MCF 10A (cell line): ENCODE measurements at regions of chr1 and their contacts with region 1.

Region 1: DNA sequence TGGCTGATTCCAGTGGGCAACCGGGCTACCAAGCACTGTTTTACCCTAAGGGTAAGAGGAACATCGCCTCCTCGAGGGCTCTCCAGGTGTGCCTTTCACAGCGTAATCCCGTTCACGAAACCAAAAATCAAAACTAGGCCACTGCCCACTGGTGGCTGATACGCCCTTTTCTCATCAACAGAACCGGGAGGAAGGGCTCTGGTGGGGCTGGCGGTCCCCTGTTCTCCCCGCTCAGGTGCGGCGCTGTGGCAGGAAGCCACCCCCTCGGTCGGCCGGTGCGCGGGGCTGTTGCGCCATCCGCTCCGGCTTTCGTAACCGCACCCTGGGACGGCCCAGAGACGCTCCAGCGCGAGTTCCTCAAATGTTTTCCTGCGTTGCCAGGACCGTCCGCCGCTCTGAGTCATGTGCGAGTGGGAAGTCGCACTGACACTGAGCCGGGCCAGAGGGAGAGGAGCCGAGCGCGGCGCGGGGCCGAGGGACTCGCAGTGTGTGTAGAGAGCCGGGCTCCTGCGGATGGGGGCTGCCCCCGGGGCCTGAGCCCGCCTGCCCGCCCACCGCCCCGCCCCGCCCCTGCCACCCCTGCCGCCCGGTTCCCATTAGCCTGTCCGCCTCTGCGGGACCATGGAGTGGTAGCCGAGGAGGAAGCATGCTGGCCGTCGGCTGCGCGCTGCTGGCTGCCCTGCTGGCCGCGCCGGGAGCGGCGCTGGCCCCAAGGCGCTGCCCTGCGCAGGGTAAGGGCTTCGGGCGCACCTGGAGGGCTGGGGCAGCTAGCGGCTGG is at the start of gene IL6R:
- DNase-seq: peak; percentile 99
- H3K4me3 Mint-ChIP-seq: peak within 1 kb of the TSS; percentile 99
- H3K27ac Mint-ChIP-seq: peak within 1 kb of the TSS; percentile 96
- H3K4me1 Mint-ChIP-seq: peaks cover 37% of the 10 kb centered on the region
- H3K27me3 Mint-ChIP-seq: no peaks in the 10 kb centered on the region
- CTCF ChIP-seq: peak; percentile 38
- total RNA-seq, gene IL6R: 22.8 and 41.0 TPM in 2 replicates

Region 2: DNA sequence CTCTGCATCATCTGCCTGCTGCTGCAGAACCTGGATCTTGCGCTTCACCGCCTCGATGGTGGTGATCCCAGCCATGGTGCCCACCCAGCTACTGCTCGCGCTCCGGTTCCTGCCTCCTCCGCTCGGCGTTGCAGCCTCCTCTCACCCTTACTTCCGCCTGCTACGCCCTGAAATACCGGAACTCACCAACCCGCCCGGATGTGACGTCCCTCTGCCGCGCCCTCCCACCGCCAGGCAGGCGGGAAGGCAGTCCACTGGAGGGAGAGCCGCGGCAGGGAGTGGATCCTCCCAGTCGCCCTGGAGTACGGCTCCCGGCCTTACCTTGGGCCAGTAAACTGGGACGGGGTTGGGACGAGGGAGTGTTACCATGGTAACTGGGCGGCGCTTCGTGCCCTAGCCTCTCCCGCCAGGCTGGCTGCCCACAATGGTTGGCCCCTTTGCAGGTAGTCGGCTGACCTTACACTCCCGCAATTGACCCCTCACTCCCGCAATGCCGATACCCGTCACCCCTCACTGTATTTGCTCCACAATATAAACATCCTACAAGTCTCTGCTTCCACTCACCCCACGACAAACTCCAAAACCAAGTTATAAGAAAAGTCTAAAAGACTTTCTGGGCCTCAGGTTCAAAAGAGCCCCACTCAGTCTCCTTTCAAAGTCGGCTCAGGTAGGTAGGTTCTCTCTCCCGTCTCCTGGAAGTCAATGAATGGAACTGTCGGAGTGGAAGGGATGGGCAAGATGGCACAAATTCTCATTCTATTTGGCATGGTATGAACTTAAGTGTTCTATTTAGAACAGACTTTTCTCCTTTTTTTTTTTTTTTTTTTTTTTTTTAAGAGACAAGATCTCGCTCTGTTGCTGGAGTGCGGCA is 221.9 kb before region 1 on chr1:
- CTCF ChIA-PET with region 1: no interaction called
- POLR2A ChIA-PET with region 1: interaction called, 3 read pairs
- intact Hi-C with region 1: loop called (anchors 1 kb)
- DNase-seq: peak; percentile 99
- H3K4me3 Mint-ChIP-seq: peak overlapping the region; percentile 92
- H3K27ac Mint-ChIP-seq: peak overlapping the region; percentile 96
- H3K4me1 Mint-ChIP-seq: peaks cover 27% of the 10 kb centered on the region
- H3K27me3 Mint-ChIP-seq: no peaks in the 10 kb centered on the region
- CTCF ChIP-seq: no peak

Region 3: DNA sequence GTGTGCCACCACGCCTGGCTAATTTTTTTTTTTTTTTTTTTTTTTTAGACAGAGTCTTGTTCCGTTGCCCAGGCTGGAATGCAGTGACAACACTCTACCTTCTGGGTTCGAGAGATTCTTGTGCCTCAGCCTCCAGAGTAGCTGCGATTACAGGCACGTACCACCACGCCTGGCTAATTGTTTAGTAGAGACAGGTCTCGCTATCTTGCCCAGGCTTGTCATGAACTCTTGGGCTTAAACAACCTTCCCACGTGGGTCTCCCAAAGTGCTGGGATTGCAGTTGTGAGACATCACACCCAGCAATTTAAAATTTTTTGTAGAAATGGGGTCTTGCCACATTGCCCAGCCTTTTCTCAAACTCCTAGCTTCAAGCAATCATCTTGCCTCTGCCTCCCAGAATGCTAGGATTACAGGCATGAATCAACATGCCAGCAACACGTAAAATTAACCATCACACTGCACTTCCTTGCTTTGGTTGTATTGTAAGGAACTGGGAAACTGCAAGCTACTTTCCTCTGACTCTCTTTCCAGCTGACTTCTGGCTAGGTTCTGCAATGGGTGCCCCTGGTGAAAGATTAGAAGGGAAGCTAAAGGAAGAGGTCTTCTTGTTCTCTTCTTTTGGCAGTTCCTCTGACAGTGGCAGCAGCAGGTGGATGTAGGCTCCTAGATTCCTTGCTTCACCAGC is 13.9 kb before region 1 on chr1:
- CTCF ChIA-PET with region 1: interaction called, 5 read pairs
- POLR2A ChIA-PET with region 1: interaction called, 21 read pairs
- intact Hi-C with region 1: no loop called
- DNase-seq: peak; percentile 45
- H3K4me3 Mint-ChIP-seq: no peak overlapping the region
- H3K27ac Mint-ChIP-seq: peak overlapping the region; percentile 61
- H3K4me1 Mint-ChIP-seq: peaks cover 8% of the 10 kb centered on the region
- H3K27me3 Mint-ChIP-seq: no peaks in the 10 kb centered on the region
- CTCF ChIP-seq: no peak

Region 4: DNA sequence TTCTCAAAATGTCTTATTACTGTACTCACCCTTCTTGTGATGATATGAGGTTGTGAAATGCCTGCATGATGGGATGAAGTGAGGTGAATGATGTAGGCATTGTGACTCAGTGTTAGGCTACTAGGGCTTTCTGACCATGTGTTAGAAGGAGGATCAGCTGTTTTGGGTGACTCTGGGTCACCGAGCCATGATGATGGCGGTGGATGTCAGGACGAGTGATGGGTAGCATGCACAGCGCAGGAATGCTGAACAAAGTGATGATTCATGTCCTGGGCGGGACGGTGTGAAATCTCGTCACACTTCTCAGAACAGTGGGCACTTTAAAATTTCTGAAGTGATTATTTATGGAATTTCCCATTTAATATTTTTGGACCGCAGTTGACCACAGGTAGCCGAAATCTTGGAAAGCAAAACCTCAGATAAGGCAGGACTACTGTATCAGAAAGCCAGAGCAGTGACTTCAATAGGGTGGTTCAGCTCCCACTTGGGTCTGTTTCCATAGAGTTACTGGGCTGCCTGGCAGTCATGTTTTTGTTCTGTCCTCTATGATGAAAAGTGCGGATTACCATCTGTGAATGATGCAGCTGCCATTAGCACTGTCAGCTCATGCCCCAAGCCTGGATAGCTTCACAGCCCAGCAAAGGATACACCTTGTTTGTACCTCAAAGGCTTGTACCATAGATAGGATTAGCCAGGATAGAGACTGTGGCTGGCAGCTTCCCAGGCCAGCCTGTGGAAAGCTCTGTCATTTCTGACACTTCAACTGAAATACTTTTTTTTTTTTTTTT is 26.6 kb after region 1 on chr1:
- CTCF ChIA-PET with region 1: interaction called, 17 read pairs
- POLR2A ChIA-PET with region 1: interaction called, 1,077 read pairs
- intact Hi-C with region 1: loop called (anchors 1 kb)
- DNase-seq: peak; percentile 94
- H3K4me3 Mint-ChIP-seq: no peak overlapping the region
- H3K27ac Mint-ChIP-seq: peak overlapping the region; percentile 55
- H3K4me1 Mint-ChIP-seq: peaks cover 44% of the 10 kb centered on the region
- H3K27me3 Mint-ChIP-seq: no peaks in the 10 kb centered on the region
- CTCF ChIP-seq: no peak

Region 5: DNA sequence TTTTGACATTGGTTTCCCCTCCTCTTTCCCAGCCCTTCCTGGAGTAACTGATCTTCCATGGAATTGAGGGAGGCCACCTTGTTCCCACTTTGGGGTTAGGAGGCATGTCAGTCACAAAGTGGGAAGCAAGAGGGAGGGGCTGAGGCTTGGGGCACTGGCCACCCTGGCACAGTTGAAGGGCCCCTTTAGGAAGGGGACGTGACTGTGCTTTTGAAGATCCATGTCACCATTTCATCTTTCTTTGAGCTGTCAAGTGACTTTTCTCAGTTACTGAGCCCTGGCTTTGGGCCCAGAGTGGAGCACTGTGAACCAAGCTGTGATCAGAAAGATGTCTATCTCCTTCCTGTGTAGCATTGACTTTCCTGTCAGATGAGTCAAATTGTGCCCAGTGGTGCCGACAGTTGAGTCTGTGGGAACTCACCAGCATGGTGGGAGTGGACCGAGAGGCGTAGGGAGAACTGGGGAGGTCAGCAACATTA is 58.4 kb after region 1 on chr1:
- CTCF ChIA-PET with region 1: no interaction called
- POLR2A ChIA-PET with region 1: interaction called, 3 read pairs
- intact Hi-C with region 1: loop called (anchors 5 kb)
- DNase-seq: no peak
- H3K4me3 Mint-ChIP-seq: no peak overlapping the region
- H3K27ac Mint-ChIP-seq: peak overlapping the region; percentile 35
- H3K4me1 Mint-ChIP-seq: no peaks in the 10 kb centered on the region
- H3K27me3 Mint-ChIP-seq: no peaks in the 10 kb centered on the region
- CTCF ChIP-seq: no peak

Region 6: DNA sequence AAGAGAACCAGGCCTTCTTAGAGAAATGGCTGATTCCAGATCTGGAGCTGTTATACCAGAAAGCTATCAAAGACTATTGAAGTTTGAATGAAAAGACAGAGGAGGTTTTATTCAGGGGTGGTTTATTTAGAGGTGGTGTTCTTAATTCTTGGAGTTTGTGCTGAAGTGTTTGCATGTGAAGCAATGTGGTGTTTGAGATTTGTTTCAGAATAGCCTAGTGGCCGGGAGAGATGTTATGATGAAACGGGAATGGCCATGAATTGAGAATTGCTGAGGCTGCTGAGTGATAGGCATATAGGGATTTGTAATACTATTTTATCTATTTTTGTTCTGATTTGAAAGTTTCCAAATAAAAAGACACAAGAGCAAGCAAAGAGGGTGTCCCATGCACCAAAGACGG is 107.6 kb after region 1 on chr1:
- CTCF ChIA-PET with region 1: no interaction called
- POLR2A ChIA-PET with region 1: no interaction called
- intact Hi-C with region 1: no loop called
- DNase-seq: no peak
- H3K4me3 Mint-ChIP-seq: no peak overlapping the region
- H3K27ac Mint-ChIP-seq: no peak overlapping the region
- H3K4me1 Mint-ChIP-seq: no peaks in the 10 kb centered on the region
- H3K27me3 Mint-ChIP-seq: peaks cover 77% of the 10 kb centered on the region
- CTCF ChIP-seq: no peak